ENCODE measurements at regions of chr5 and their contacts with region 1.

Region 1: DNA sequence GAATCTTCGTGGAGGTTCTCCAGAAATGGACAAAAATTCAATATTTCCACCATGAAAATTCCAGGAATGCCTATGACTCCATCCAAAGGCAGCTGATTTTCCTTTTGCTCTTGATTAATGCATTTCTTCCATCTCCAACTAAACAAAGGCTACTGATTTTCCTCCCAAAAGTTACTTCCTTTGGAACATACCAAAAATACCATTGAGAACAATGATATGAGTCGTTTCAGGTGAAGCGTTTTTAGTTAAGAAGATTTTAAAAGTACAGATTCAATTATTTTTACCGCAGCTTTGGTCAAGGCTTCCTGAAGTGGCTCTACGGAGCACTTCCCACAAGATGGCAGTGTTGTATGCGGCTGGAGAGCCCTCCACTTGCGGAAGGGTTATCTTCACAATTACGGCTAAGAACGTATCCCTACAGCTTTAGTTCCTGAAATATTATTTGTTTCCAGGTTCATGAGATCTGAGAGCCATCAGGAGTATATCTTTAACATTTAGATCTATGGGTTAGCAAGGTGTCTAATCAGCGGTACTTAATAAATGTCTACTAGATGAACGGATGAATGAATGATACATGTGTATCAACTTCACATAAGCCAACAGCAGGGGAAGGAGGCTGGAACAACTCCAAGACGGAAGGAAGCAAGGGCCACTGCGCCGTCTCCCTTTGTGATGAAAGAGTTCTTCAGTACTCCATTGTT is 35.9 kb upstream of the ARSB start:
- DNase-seq: peak; percentile 33
- H3K4me3 ChIP-seq: peak overlapping the region; percentile 29 to 38; a peak in 3 of 4 replicates
- H3K27ac ChIP-seq: peak overlapping the region in 1 of 2 experiments; percentile 60; a peak in 3 of 4 replicates
- H3K4me1 ChIP-seq: peaks cover 0 to 11% of the 10 kb centered on the region in 2 experiments; a peak in 3 of 4 replicates
- H3K27me3 ChIP-seq: no peaks in the 10 kb centered on the region
- CTCF ChIP-seq: peak; percentile 91
- EP300 ChIP-seq: peak in 1 of 2 experiments; percentile 22; a peak in 1 of 4 replicates
- RAD21 ChIP-seq: peak; percentile 88

Region 2: GRCh38 chr5:78929833-78930232 is 91.2 kb before region 1 on chr5:
- CTCF ChIA-PET with region 1: no interaction called
- POLR2A ChIA-PET with region 1: no interaction called
- DNase-seq: no peak
- H3K4me3 ChIP-seq: no peak overlapping the region
- H3K27ac ChIP-seq: no peak overlapping the region
- H3K4me1 ChIP-seq: peaks cover 6 to 8% of the 10 kb centered on the region in 2 experiments; a peak in 2 of 4 replicates
- H3K27me3 ChIP-seq: no peaks in the 10 kb centered on the region
- CTCF ChIP-seq: no peak
- EP300 ChIP-seq: no peak
- RAD21 ChIP-seq: no peak

Region 3: DNA sequence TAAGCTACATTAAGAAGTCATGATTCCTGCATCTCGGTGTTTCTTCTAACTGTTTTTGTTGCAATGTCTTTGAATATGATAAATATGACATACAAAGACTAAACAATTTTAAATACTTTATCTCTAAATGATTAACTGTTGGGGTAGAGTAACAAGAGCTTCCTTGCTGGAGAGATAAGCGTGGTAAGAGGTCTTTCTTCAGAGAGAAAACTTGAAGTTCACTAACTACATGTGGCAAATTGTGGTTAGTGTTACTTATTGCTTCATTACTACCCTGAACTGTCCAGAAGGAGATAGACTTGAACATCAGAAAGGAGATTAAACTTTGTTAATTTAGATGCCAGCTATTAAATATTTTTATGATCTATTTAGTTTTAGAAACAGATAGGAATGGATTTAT is 28.9 kb before region 1 on chr5:
- CTCF ChIA-PET with region 1: interaction called, 68 read pairs
- POLR2A ChIA-PET with region 1: no interaction called
- DNase-seq: no peak
- H3K4me3 ChIP-seq: no peak overlapping the region
- H3K27ac ChIP-seq: no peak overlapping the region
- H3K4me1 ChIP-seq: no peaks in the 10 kb centered on the region
- H3K27me3 ChIP-seq: no peaks in the 10 kb centered on the region
- CTCF ChIP-seq: no peak
- EP300 ChIP-seq: no peak
- RAD21 ChIP-seq: no peak

Region 4: DNA sequence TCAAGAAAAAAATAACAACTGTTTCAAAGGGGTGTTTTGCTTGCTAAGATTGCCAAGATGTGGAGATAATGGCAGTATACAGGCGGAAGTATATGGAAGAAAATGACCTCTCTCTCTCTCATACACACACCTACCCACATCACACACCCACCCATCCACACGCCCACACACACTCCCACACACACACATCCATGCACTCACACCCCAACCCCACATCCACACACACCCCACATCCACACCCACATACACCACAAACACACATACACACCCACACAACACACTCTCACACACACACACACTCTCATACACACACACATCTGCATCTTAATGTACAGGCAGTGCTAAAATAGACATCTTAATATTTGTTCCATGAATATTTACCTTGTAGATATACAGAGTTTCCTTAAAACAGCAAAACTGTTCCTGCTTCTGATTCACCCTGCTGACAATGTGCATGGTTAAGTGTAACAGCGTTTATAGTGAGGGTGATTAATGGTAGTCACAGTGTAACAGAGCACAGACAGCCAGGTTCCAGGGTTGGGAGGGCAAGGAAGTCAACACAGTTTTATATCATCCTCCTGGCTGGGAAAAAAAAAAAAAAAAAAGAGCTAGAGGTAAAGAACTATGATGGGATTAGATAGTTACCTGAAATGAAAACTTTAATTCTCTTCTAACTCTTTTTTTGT is 56.8 kb after region 1 on chr5:
- CTCF ChIA-PET with region 1: interaction called, 18 read pairs
- POLR2A ChIA-PET with region 1: no interaction called
- DNase-seq: no peak
- H3K4me3 ChIP-seq: no peak overlapping the region
- H3K27ac ChIP-seq: no peak overlapping the region
- H3K4me1 ChIP-seq: no peaks in the 10 kb centered on the region; a peak in 1 of 4 replicates
- H3K27me3 ChIP-seq: no peaks in the 10 kb centered on the region
- CTCF ChIP-seq: no peak
- EP300 ChIP-seq: no peak
- RAD21 ChIP-seq: no peak

Region 5: DNA sequence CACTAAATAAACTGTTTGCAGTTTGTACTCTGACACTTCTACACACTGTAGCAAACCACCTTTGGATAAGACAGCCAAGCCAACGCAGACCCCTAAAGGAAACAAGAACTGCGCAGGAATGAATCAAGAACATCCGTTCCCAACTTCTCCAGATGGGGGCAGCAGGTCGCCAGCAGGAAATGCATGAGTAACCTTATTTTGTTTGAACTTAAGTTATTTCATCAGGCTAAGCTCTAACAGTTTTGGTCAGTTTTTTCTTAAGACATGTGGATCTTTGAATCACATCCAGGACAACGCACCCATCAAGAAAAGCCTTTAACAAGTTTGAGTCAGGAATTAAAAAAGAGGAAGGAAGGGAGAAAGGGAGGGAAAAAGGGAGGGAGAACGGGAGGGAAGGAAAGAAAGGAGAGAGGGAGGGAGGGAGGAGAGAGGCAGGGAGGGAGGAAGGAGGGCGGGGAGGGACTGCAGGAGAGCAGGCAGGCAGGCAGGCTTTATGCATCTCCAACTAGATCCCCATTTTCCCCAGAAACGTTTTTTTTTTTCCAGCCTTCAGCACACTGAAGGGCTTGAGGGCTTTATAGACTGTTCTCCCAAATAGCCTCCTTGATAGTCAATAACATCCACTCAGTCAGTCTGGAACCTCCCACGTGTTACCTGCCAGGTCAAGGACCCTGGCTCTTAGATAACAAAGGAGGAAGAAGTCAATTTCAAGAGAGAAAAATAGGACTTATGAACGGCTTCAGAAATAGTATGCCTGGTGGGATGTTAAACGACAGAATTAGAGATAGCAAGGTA is 112.8 kb after region 1 on chr5:
- CTCF ChIA-PET with region 1: interaction called, 585 read pairs
- POLR2A ChIA-PET with region 1: interaction called, 9 read pairs
- DNase-seq: peak; percentile 69
- H3K4me3 ChIP-seq: peak overlapping the region; percentile 43 to 59
- H3K27ac ChIP-seq: peak overlapping the region; percentile 74 to 82
- H3K4me1 ChIP-seq: peaks cover 0 to 12% of the 10 kb centered on the region in 2 experiments; a peak in 2 of 4 replicates
- H3K27me3 ChIP-seq: no peaks in the 10 kb centered on the region
- CTCF ChIP-seq: peak; percentile 81
- EP300 ChIP-seq: no peak
- RAD21 ChIP-seq: peak; percentile 81

Region 6: DNA sequence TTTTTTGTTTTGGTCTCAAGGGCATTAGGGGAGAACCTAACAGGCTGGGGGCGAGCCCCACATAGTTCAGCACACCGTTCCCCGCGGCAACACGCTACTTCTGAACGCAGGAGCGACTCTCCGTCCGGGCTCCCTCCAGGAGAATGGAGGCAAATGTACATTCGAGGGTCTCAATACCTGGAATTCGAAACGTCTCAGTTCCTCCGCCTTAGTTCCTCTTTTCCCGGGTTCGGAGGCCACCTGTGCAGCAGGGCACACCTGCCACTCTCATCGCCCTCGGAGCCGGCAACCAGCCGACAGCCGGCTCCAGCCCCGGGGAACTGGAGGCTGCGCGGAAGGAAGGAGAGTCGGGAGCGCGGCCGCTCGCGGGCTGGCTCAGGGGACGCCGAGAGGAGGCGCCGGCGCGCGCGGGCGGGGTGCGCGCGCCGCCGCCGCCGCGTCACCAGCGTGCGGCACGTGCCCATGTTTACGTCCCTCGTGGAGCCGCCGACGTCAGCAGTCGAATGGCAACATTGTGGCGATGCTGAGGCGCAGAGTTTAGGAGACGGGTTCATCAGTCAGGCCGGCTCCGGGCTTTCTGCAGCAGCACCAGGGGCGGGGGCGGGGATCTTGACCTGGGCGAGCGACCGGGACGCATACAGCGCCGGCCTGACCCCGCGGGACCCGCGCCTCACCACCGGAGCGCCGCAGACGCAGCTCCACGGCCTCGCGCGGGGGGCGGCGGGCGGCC is 214.8 kb after region 1 on chr5 and contains the start of gene JMY:
- CTCF ChIA-PET with region 1: interaction called, 24 read pairs
- POLR2A ChIA-PET with region 1: no interaction called
- DNase-seq: peak; percentile 96
- H3K4me3 ChIP-seq: peak within 1 kb of the TSS; percentile 75 to 96
- H3K27ac ChIP-seq: peak within 1 kb of the TSS; percentile 71 to 74
- H3K4me1 ChIP-seq: peaks cover 0 to 2% of the 10 kb centered on the region in 2 experiments; a peak in 2 of 4 replicates
- H3K27me3 ChIP-seq: no peaks in the 10 kb centered on the region
- CTCF ChIP-seq: no peak
- EP300 ChIP-seq: no peak
- RAD21 ChIP-seq: no peak
- polyA plus RNA-seq, gene JMY: 1.7 and 1.9 TPM in 2 replicates

Region 7: DNA sequence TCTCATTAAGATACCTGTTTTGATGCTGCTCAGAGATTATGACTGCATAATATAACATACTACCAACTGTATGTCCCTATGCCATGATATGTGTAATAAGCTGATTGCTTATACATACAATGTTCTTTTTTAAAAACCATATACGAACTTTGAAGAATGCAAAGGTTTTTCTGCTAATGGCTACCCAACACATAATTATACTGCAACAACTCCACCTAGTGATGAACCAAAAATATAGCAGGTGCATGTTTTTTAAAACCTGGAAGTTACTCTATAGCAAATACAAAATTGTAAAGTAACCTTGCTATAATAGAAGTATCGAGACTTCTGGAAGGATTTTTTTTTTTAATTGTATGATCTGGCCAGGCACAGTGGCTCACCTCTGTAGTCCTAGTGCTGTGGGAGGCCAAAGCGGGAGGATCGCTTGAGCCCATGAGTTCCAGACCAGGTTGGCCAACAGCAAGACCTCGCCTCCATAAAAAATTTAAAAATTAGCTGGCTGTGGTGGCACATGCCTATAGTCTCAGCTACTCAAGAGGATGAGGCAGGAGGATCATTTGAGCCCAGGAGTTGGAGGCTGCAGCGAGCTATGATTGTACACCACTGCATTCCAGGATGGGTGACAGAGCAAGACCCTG is 443.8 kb after region 1 on chr5:
- CTCF ChIA-PET with region 1: interaction called, 219 read pairs
- POLR2A ChIA-PET with region 1: no interaction called
- DNase-seq: peak; percentile 39
- H3K4me3 ChIP-seq: no peak overlapping the region
- H3K27ac ChIP-seq: no peak overlapping the region
- H3K4me1 ChIP-seq: no peaks in the 10 kb centered on the region
- H3K27me3 ChIP-seq: no peaks in the 10 kb centered on the region
- CTCF ChIP-seq: peak; percentile 79
- EP300 ChIP-seq: no peak
- RAD21 ChIP-seq: peak; percentile 86